AG04450 (cell line): ENCODE measurements at regions of chr1 and their contacts with region 1.

Region 1: GRCh38 chr1:183915625-183916510 is 110.9 kb downstream of the RGL1 start:
- DNase-seq: peak; percentile 97
- H3K4me3 ChIP-seq: peak overlapping the region; percentile 11; the same call in 1 of the 2 replicates
- H3K27ac ChIP-seq: peak overlapping the region; percentile 74
- H3K27me3 ChIP-seq: no peaks in the 10 kb centered on the region
- CTCF ChIP-seq: peak; percentile 85

Region 2: GRCh38 chr1:183633633-183634343 is 282.1 kb before region 1 on chr1:
- CTCF ChIA-PET with region 1: interaction called, 13 read pairs
- POLR2A ChIA-PET with region 1: interaction called, 3 read pairs
- DNase-seq: peak; percentile 84
- H3K4me3 ChIP-seq: peak overlapping the region; percentile 87
- H3K27ac ChIP-seq: no peak overlapping the region
- H3K27me3 ChIP-seq: no peaks in the 10 kb centered on the region
- CTCF ChIP-seq: peak; percentile 64

Region 3: DNA sequence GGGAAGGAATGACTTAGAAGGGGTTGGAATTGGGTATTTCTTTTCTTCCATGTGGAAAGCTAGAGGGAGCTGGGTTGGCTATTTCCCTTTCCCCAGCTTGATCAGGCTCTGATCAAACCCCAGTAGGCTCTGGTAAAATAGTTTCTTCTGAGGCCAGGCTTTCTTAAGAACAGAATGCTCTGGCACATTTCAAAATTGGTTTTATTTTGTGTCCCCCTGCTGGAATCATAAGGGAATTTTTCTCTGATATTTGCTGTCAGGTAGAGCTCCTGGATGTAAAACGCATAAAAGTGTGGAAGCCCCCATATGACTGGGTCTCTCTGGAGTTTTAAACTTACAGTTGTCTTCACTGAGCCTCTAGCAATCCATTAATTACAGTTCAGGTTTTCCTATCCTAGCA is 245.7 kb before region 1 on chr1:
- CTCF ChIA-PET with region 1: interaction called, 11 read pairs
- POLR2A ChIA-PET with region 1: no interaction called
- DNase-seq: no peak
- H3K4me3 ChIP-seq: no peak overlapping the region
- H3K27ac ChIP-seq: no peak overlapping the region
- H3K27me3 ChIP-seq: no peaks in the 10 kb centered on the region
- CTCF ChIP-seq: peak; percentile 31; the same call in 1 of the 2 replicates

Region 4: DNA sequence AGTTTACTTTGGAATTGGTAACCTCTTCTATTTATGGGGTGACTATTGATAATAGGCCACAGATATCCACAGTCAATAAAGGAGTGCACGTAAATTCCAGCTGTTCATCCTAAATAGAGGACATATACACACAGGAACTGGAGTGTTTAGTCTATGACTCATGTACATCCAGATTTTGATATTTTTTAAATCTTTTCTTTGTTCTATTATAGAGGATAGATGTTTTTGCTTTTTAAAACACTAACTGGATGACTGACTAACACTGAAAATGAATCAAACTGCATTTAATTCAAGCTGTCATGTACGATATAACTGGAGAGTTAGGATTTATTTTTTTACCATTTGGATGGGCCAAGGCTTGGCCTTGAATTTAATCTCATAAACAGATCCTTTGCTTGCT is 65.0 kb before region 1 on chr1:
- CTCF ChIA-PET with region 1: no interaction called
- POLR2A ChIA-PET with region 1: no interaction called
- DNase-seq: no peak
- H3K4me3 ChIP-seq: no peak overlapping the region
- H3K27ac ChIP-seq: no peak overlapping the region
- H3K27me3 ChIP-seq: no peaks in the 10 kb centered on the region
- CTCF ChIP-seq: no peak

Region 5: GRCh38 chr1:183862967-183863366 is 52.9 kb before region 1 on chr1:
- CTCF ChIA-PET with region 1: no interaction called
- POLR2A ChIA-PET with region 1: no interaction called
- DNase-seq: no peak
- H3K4me3 ChIP-seq: no peak overlapping the region
- H3K27ac ChIP-seq: no peak overlapping the region
- H3K27me3 ChIP-seq: no peaks in the 10 kb centered on the region
- CTCF ChIP-seq: no peak

Region 6: GRCh38 chr1:183891158-183891856 is 24.6 kb before region 1 on chr1:
- CTCF ChIA-PET with region 1: interaction called, 10 read pairs
- POLR2A ChIA-PET with region 1: no interaction called
- DNase-seq: no peak
- H3K4me3 ChIP-seq: no peak overlapping the region
- H3K27ac ChIP-seq: no peak overlapping the region
- H3K27me3 ChIP-seq: no peaks in the 10 kb centered on the region
- CTCF ChIP-seq: no peak